ENCODE measurements at regions of chr4 and their contacts with region 1.

Region 1: GRCh38 chr4:38782452-38783108 is at the start of gene TLR10:
- DNase-seq: peak; percentile 35
- H3K4me3 Mint-ChIP-seq: peak within 1 kb of the TSS; percentile 23
- H3K27ac Mint-ChIP-seq: no peak within 1 kb of the TSS
- H3K4me1 Mint-ChIP-seq: peaks cover 4% of the 10 kb centered on the region
- H3K27me3 Mint-ChIP-seq: peaks cover 2% of the 10 kb centered on the region
- total RNA-seq, gene TLR10: 0.05 TPM in 1 of 2 experiments, not detected in the other

Region 2: DNA sequence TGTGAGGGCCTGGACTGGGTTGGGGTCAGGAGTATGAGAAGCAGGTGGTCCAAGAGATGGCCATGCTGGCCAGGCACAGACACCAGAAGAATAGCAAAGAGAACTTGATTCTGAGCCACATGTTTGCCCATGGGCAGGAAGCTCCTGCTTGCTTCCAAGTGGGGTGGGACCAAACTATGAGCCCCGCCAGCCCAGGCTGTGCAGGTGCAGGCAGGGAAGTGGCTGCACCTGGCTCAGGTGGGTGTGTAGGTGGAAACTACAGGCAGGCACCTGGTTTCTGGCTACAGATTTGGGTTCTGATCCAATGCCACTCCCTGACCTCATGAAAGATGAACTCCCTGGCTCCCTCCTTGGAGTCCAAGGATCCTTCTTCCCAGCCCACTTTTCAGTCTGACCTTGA is 326.5 kb before region 1 on chr4:
- CTCF ChIA-PET with region 1: no interaction called
- POLR2A ChIA-PET with region 1: no interaction called
- intact Hi-C with region 1: no loop called
- DNase-seq: no peak
- H3K4me3 Mint-ChIP-seq: no peak overlapping the region
- H3K27ac Mint-ChIP-seq: peak overlapping the region; percentile 79
- H3K4me1 Mint-ChIP-seq: peaks cover 49% of the 10 kb centered on the region
- H3K27me3 Mint-ChIP-seq: peaks cover 15% of the 10 kb centered on the region

Region 3: DNA sequence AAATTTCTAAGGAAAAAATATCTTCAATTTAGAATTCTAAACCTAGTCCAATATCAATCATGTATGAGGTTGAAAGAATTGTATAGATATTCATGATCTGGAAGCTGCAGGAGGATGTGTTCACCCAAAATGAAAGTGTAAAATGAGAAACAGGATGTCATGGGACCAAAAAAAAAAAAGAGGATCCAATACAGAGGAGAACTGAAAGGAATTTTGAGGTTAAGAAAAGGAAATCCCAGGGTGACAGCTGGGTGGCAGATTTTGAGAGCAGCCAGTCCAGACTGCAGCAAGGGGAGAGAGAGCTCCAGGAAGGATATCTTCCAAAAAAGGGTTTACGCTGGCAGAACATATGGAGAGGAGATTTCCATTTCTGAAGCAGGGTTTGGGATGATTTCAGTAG is 38.7 kb before region 1 on chr4:
- CTCF ChIA-PET with region 1: interaction called, 11 read pairs
- POLR2A ChIA-PET with region 1: no interaction called
- intact Hi-C with region 1: no loop called
- DNase-seq: no peak
- H3K4me3 Mint-ChIP-seq: no peak overlapping the region
- H3K27ac Mint-ChIP-seq: no peak overlapping the region
- H3K4me1 Mint-ChIP-seq: peaks cover 3% of the 10 kb centered on the region
- H3K27me3 Mint-ChIP-seq: no peaks in the 10 kb centered on the region

Region 4: DNA sequence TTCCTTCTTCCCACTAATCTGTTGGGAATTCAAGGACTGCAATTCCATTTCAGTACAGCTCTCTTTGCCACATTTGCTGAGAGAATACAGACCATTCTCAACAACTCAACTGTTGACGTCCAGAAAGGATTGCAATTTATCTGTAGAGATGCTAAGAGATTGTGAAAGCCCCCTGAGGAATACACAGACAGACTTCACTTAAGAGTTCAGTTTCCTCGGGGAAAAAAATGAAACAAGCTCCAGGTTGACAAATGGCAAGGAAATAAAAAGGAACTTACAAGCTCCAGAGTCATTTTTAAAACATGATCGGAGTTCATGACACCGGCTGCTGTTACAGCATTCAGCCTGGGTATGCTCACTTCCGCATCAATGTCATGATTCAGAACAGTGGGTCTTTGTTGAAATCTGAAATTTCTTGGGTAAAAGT is 13.6 kb before region 1 on chr4:
- CTCF ChIA-PET with region 1: interaction called, 11 read pairs
- POLR2A ChIA-PET with region 1: no interaction called
- intact Hi-C with region 1: no loop called
- DNase-seq: no peak
- H3K4me3 Mint-ChIP-seq: no peak overlapping the region
- H3K27ac Mint-ChIP-seq: no peak overlapping the region
- H3K4me1 Mint-ChIP-seq: no peaks in the 10 kb centered on the region
- H3K27me3 Mint-ChIP-seq: peaks cover 3% of the 10 kb centered on the region

Measured in activated CD4-positive, alpha-beta memory T cell treated with anti-CD3 and anti-CD28 coated beads for 36 hours (primary cell).